A673 (cell line): ENCODE measurements at regions of chr1 and their contacts with region 1.

Region 1: DNA sequence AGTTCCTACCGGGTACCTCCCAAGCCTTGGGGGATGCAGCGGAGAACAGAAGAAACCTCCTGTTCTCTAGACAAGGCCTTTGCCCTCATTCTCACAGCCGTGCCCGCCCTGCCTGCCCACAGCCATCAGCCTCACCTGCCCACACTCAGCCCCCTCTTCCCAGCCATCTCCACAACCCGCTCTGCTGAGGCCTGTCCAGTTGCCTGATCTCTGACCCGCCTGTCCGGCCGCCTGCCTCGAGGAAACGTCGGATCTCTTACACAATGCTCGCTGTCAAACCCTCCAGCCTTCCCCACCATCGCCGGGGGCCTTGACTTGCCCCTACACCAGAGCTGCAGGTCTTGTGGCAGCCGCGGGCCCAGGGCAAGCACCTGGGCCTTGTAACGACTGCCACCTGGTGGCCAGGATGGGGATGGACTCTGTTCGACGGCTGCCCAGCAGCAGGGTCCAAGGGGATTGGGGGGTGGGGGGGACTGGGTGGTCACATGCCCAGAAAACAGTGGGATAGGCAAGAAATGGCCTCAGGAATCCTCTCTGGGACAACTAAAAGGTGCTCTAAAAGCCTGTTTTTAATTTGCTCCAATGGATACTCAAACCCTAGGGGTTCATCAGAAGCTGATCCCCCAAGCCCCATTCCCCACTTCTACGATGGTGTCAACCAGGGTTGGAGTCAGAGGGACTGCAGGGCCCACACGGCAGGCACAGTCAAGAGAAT is 31.0 kb downstream of the SLC45A1 start:
- DNase-seq: peak; percentile 77
- H3K4me3 ChIP-seq: no peak overlapping the region
- H3K27ac ChIP-seq: no peak overlapping the region
- H3K4me1 ChIP-seq: peaks cover 17% of the 10 kb centered on the region
- H3K27me3 ChIP-seq: no peaks in the 10 kb centered on the region
- CTCF ChIP-seq: peak; percentile 90

Region 2: DNA sequence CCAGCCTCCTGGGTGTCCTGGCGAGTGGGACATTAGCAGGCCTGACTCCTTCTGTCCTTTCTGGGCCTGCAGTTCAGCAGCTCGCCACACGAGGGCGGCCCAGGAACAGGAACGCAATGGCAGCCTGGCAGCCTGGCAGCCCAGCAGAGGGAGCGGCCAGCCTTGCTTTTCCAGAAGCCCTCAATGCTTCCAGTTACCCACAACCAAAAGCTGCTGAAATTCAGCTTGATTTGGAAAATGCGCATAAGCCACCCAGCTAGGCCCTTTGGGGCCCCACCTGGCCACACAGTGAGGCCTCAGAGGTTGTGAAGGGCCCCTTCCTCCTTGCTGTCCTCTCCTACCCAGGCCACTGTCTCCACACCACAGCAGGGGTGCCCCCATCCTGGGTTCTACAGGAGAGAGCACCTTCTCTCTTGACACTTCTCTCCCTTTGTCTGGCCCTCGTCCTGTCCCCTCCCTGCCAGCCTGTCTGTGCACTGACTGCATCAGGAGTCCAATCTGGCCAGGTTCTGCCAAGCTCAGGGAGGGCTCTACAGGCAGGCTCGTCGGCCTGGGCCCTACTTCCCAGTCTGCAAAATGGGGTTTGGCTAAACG is 681.2 kb before region 1 on chr1:
- CTCF ChIA-PET with region 1: no interaction called
- POLR2A ChIA-PET with region 1: no interaction called
- intact Hi-C with region 1: loop called (anchors 10 kb)
- DNase-seq: peak; percentile 87
- H3K4me3 ChIP-seq: no peak overlapping the region
- H3K27ac ChIP-seq: no peak overlapping the region
- H3K4me1 ChIP-seq: peaks cover 4% of the 10 kb centered on the region
- H3K27me3 ChIP-seq: no peaks in the 10 kb centered on the region
- CTCF ChIP-seq: peak; percentile 99

Region 3: DNA sequence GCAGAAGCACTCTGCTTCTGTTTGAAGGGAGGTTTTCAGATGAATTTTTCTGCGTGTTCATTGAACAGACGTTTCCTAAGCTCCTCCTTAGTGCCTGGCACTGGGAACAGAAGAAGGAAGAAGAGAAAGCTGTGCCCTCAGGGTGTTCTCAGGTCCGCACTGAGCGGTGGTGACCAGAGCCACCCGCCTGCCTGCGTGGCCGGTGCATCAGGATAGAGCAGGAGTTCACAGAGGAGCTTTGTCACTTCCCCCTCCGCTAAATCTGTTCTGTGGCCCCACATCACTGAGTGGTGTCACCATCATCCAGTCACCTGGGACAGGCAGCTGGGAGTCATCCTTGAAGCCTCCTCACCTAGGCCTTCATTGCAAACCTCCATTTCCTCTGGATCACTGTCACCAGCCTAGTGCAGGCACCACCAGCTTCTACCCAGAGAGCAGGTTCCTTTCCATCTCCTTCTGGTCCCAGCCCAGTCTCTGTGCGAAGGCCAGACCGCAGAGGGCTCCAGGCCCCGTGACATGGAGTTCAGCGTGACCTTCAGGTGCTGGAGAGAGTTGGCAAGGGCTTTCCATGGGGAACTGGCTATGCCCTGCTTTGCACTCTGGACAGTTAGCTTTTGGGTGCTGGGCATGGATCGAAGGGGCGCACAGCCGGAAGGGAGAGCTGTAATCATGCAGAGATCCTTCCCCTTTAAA is 365.7 kb before region 1 on chr1:
- CTCF ChIA-PET with region 1: interaction called, 9 read pairs
- POLR2A ChIA-PET with region 1: no interaction called
- intact Hi-C with region 1: loop called (anchors 2 kb)
- DNase-seq: no peak
- H3K4me3 ChIP-seq: no peak overlapping the region
- H3K27ac ChIP-seq: no peak overlapping the region
- H3K4me1 ChIP-seq: no peaks in the 10 kb centered on the region
- H3K27me3 ChIP-seq: no peaks in the 10 kb centered on the region
- CTCF ChIP-seq: no peak

Region 4: DNA sequence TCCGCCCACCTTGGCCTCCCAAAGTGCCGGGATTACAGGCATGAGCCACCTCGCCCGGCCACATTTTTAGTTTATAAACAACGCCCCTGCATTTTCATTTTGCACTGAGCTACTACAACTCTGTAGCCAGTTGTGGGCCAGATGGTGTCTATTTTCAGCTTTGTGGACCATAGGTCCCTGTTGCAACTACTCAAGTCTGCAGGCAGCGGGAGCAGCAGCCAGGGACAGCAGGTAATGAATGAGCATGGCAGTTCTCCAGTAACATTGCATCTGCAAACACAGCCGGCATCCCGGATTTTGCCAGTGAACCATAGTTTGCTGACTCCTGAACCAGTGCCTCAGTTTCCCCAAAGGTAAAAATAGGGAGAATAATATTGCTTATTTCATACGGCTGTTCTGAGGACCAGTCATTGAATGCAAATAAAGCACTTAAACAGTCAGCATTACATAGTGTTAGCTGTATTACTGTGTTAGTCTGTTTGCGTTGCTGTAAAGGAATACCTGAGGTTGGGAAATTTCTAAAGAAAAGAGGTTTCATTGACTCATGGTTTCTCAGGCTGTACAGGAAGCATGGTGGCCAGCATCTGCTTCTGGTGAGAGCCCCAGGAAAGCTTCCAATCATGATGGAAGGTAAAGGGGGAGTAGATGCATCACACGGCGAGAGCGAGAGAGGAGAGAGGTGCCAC is 96.5 kb before region 1 on chr1:
- CTCF ChIA-PET with region 1: no interaction called
- POLR2A ChIA-PET with region 1: interaction called, 10 read pairs
- intact Hi-C with region 1: no loop called
- DNase-seq: no peak
- H3K4me3 ChIP-seq: no peak overlapping the region
- H3K27ac ChIP-seq: no peak overlapping the region
- H3K4me1 ChIP-seq: no peaks in the 10 kb centered on the region
- H3K27me3 ChIP-seq: no peaks in the 10 kb centered on the region
- CTCF ChIP-seq: no peak

Region 5: GRCh38 chr1:8858888-8859706 is 510.2 kb after region 1 on chr1:
- CTCF ChIA-PET with region 1: no interaction called
- POLR2A ChIA-PET with region 1: no interaction called
- intact Hi-C with region 1: loop called (anchors 10 kb)
- DNase-seq: peak; percentile 80
- H3K4me3 ChIP-seq: no peak overlapping the region
- H3K27ac ChIP-seq: no peak overlapping the region
- H3K4me1 ChIP-seq: no peaks in the 10 kb centered on the region
- H3K27me3 ChIP-seq: no peaks in the 10 kb centered on the region
- CTCF ChIP-seq: peak; percentile 81